ENCODE measurements at regions of chr14 and their contacts with region 1.

Region 1: DNA sequence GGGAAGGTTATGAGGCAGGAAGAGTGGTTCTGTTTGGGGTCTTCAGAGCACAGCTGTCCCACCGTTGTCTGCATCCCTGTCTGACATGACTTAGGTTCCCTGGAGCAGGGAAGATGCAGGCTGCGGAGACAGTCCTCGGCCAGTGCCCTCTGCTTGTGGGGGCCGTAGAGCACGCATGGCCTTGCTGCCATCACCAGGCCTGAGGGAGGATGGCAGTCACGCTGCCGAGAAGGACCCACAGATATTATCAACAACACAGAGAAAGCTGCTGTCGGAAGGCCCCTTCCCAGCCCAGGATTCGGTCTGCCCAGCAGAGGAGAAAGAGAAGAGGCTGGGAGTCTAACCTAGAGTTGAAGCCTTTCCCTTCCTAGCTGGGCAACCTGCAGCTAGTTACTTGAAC is 35.0 kb downstream of the ERH start:
- DNase-seq: peak in 1 of 2 experiments; percentile 27
- H3K4me3 ChIP-seq: no peak overlapping the region
- H3K27ac ChIP-seq: no peak overlapping the region
- H3K4me1 ChIP-seq: peaks cover 0 to 3% (median 0%) of the 10 kb centered on the region in 4 experiments; a peak in 1 of 7 replicates
- H3K27me3 ChIP-seq: no peaks in the 10 kb centered on the region
- CTCF ChIP-seq: peak; percentile 88 to 95 (median 88)
- EP300 ChIP-seq: no peak
- POLR2A ChIP-seq: no peak
- RAD21 ChIP-seq: peak; percentile 93 to 95

Region 2: DNA sequence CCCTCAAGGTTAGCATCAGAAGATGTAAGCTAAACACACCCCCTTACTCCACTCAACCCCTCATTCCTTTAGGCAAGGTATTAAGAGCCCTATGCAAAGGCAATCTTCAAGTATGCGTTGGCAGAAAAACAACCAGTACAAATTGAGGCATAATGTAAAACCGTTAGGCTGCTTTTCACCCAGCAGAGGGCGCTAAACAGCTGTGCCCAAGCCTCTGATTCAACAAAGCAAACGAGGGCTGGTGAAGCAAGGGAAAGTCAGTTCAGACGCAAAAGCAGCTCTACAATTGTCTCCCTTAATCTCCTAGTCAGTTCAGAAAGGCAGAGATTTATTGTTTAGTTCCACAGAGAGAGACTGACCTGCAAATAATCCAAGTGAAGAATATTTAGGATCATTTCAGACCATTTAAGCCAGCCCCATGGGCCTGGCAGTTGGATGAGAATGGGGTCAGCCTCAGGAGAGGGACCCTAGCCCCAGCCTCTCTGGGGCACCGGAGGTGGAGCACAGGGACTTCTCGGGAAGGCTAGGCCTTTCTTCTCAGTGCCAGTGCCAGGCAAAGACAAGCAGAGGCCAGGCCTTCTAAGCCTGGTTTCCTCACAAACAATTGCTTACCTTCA is 233.7 kb before region 1 on chr14:
- CTCF ChIA-PET with region 1: interaction called, 16 read pairs
- POLR2A ChIA-PET with region 1: no interaction called
- DNase-seq: peak in 1 of 2 experiments; percentile 73
- H3K4me3 ChIP-seq: no peak overlapping the region
- H3K27ac ChIP-seq: peak overlapping the region; percentile 1; the same call in 1 of the 2 replicates
- H3K4me1 ChIP-seq: peaks cover 0 to 4% (median 2%) of the 10 kb centered on the region in 4 experiments; a peak in 3 of 7 replicates
- H3K27me3 ChIP-seq: no peaks in the 10 kb centered on the region
- CTCF ChIP-seq: peak; percentile 62 to 98 (median 85)
- EP300 ChIP-seq: no peak
- POLR2A ChIP-seq: peak in 1 of 2 experiments; percentile 23; a peak in 1 of 3 replicates
- RAD21 ChIP-seq: peak; percentile 87 to 94

Region 3: DNA sequence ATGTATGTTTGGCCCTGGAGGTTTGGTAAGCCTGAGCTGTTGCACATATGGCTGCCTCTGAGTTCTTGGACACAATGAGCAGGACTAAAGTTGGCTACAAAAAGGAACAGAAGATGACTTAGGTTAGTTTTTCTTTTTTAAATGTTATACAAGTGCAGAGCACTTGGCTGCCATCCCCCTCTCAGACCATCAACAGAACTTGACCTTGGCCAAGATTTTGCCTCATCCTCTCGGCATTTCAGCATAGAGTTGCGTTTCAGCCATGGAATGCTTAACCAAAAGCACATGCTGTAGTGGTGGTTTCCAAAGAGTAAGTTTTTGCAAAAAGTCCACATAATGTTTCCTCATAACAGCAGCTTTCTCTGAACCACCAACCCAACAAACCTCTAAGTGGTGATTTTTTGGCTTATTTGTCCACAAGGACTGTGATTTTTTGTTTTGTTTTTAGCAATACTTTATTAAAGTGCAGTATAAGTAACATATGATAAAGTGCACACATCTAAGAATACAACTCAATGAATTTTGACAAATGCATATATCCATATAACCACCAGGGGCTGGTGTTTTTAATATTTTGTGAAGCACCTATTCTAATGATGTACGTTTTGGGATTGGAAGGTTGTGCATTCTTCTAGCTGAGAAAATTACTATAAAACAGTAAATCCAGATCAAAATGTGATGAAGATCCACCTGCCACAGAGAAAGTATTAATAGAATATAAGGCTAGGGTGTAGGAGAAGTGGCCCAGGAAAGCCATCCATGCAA is 115.2 kb before region 1 on chr14:
- CTCF ChIA-PET with region 1: interaction called, 130 read pairs
- POLR2A ChIA-PET with region 1: no interaction called
- DNase-seq: no peak
- H3K4me3 ChIP-seq: no peak overlapping the region
- H3K27ac ChIP-seq: no peak overlapping the region
- H3K4me1 ChIP-seq: no peaks in the 10 kb centered on the region; a peak in 1 of 7 replicates
- H3K27me3 ChIP-seq: no peaks in the 10 kb centered on the region
- CTCF ChIP-seq: no peak
- EP300 ChIP-seq: no peak
- POLR2A ChIP-seq: no peak
- RAD21 ChIP-seq: no peak

Region 4: GRCh38 chr14:69281450-69282169 is 81.4 kb before region 1 on chr14:
- CTCF ChIA-PET with region 1: interaction called, 10 read pairs
- POLR2A ChIA-PET with region 1: no interaction called
- DNase-seq: no peak
- H3K4me3 ChIP-seq: no peak overlapping the region
- H3K27ac ChIP-seq: no peak overlapping the region
- H3K4me1 ChIP-seq: no peaks in the 10 kb centered on the region
- H3K27me3 ChIP-seq: no peaks in the 10 kb centered on the region
- CTCF ChIP-seq: no peak
- EP300 ChIP-seq: no peak
- POLR2A ChIP-seq: no peak
- RAD21 ChIP-seq: no peak

Region 5: GRCh38 chr14:69335371-69335771 is 27.7 kb before region 1 on chr14:
- CTCF ChIA-PET with region 1: interaction called, 15 read pairs
- POLR2A ChIA-PET with region 1: interaction called, 3 read pairs
- DNase-seq: no peak
- H3K4me3 ChIP-seq: no peak overlapping the region
- H3K27ac ChIP-seq: no peak overlapping the region
- H3K4me1 ChIP-seq: peaks cover 0 to 2% (median 0%) of the 10 kb centered on the region in 4 experiments; a peak in 1 of 7 replicates
- H3K27me3 ChIP-seq: no peaks in the 10 kb centered on the region
- CTCF ChIP-seq: no peak
- EP300 ChIP-seq: no peak
- POLR2A ChIP-seq: no peak
- RAD21 ChIP-seq: no peak

Region 6: GRCh38 chr14:69408331-69408960 is 45.4 kb after region 1 on chr14:
- CTCF ChIA-PET with region 1: no interaction called
- POLR2A ChIA-PET with region 1: no interaction called
- DNase-seq: no peak
- H3K4me3 ChIP-seq: no peak overlapping the region
- H3K27ac ChIP-seq: no peak overlapping the region
- H3K4me1 ChIP-seq: no peaks in the 10 kb centered on the region
- H3K27me3 ChIP-seq: no peaks in the 10 kb centered on the region
- CTCF ChIP-seq: no peak
- EP300 ChIP-seq: no peak
- POLR2A ChIP-seq: no peak
- RAD21 ChIP-seq: no peak

Region 7: GRCh38 chr14:69460093-69460701 is 97.1 kb after region 1 on chr14:
- CTCF ChIA-PET with region 1: no interaction called
- POLR2A ChIA-PET with region 1: no interaction called
- DNase-seq: no peak
- H3K4me3 ChIP-seq: no peak overlapping the region
- H3K27ac ChIP-seq: no peak overlapping the region
- H3K4me1 ChIP-seq: no peaks in the 10 kb centered on the region
- H3K27me3 ChIP-seq: no peaks in the 10 kb centered on the region
- CTCF ChIP-seq: peak in 2 of 3 experiments; percentile 60 to 80; a peak in 3 of 4 replicates
- EP300 ChIP-seq: no peak
- POLR2A ChIP-seq: no peak
- RAD21 ChIP-seq: peak; percentile 70 to 75

Measured in H1 (cell line).